ENCODE measurements at regions of chr9 and their contacts with region 1.

Region 1: GRCh38 chr9:82134010-82134409 is 145.4 kb downstream of the SPATA31D1 start:
- DNase-seq: no peak
- ATAC-seq: no peak
- H3K4me3 ChIP-seq: no peak overlapping the region
- H3K27ac ChIP-seq: no peak overlapping the region
- H3K4me1 ChIP-seq: no peaks in the 10 kb centered on the region
- H3K27me3 ChIP-seq: no peaks in the 10 kb centered on the region
- CTCF ChIP-seq: no peak
- POLR2A ChIP-seq: no peak

Region 2: DNA sequence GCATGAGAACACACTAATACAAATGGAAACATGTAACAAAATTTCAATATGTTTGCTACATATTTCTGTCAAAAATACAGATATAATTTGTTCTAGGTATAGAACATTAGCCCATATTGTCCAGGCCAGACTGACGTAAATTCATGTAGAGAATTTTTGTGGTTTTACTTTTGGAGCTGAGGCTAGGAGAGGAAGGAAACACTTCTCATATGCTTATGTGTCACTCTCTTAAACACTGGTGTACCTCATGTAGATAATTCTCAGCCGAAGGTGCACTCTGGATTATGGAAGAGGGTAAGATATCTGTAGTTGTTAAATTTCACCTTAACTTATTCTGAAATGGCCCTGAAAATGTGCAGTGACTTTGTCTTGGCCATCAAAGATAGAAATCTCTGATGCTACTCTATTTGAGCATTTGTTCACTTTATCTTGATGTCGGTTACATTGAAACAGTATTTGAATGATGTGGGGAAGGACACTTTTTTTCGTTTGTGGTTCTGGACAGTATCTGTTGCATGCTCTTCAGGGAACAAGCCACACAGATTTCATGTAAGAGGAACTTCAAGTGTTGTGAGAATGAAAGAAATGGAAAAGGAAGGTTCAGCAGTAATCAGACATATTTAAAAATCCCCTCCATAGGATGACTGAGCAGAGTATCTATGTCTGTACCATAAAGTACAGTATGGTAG is 57.2 kb after region 1 on chr9:
- intact Hi-C with region 1: loop called in 1 of 10 experiments (anchors 10 kb)
- DNase-seq: no peak
- ATAC-seq: no peak
- H3K4me3 ChIP-seq: no peak overlapping the region
- H3K27ac ChIP-seq: no peak overlapping the region
- H3K4me1 ChIP-seq: no peaks in the 10 kb centered on the region
- H3K27me3 ChIP-seq: no peaks in the 10 kb centered on the region
- CTCF ChIP-seq: no peak
- POLR2A ChIP-seq: no peak

Measured in heart left ventricle (tissue), 16 donors.